Activated naive CD4-positive, alpha-beta T cell treated with anti-CD3 and anti-CD28 coated beads for 36 hours (primary cell): ENCODE measurements at regions of chr3 and their contacts with region 1.

Region 1: GRCh38 chr3:108914774-108915641 is 38.7 kb downstream of the GUCA1C start:
- DNase-seq: peak; percentile 81
- H3K4me3 Mint-ChIP-seq: peak overlapping the region; percentile 29
- H3K27ac Mint-ChIP-seq: peak overlapping the region; percentile 1
- H3K4me1 Mint-ChIP-seq: peaks cover 12% of the 10 kb centered on the region
- H3K27me3 Mint-ChIP-seq: no peaks in the 10 kb centered on the region

Region 2: DNA sequence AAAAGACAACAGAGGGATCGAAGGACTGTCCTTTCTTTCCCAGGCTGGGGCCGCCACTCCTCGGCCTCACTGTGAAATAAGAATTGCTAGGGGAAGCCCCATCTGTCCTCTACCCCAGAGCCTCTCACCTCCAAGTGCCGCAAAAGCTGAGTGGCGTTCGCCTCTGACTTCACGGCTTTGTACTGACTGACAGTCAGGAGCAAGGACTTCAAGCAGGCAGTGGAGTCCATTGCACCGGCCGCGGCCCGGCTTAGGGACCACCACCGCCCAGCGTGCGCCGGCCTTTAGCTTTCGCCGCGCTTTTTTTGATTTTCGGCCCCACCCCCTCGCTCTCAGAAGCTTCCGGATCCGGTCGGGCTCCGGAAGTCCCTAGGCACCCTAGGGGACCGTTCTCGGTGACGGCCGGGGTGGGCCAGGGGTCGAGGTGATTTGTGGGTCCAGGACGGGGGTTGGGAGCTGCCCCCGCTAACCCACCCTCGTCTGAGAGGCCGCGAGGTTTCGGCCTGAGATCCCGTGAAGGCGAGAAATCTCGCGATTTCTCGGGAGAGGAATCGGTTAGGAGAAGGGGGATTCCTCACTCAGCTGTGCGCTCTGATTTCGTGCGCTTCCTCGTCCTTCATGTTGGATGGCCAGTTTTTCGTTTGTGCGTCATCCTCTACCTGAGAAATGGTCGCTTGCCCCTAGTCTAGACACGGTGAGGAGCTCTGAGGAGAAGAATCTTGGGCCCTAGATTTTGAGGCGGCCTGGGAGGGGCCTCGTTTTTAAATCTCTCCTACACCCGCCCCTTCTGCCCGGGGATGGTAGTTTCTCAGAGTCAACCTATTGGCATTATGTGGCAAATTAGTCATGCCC is 325.6 kb before region 1 on chr3 and contains the starts of genes CIP2A and DZIP3:
- CTCF ChIA-PET with region 1: no interaction called
- intact Hi-C with region 1: loop called (anchors 1 kb)
- DNase-seq: peak; percentile 84
- H3K4me3 Mint-ChIP-seq: peak within 1 kb of the TSS; percentile 95
- H3K27ac Mint-ChIP-seq: peak within 1 kb of the TSS; percentile 99
- H3K4me1 Mint-ChIP-seq: peaks cover 36% of the 10 kb centered on the region
- H3K27me3 Mint-ChIP-seq: no peaks in the 10 kb centered on the region
- total RNA-seq, gene CIP2A: 34.7 to 39.9 TPM
- total RNA-seq, gene DZIP3: 11.2 to 12.2 TPM

Region 3: DNA sequence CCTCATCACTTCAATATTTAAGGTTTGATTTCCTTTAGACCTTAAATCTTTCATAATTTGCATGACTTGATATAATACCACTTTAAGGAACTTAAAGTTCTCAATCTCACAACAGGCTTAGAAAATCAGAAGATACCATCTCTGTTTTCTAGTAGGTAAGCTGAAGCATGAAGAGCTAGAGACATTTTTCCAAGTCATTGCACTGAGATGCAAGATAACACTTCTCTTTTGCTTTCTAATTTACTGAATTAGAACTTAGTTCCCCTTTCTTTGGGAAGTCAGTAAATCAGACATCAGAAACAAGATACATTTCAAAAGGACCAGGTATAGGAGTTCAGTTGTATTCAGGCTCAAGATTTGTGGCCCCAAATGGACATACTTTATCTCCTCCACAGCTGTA is 245.8 kb before region 1 on chr3:
- CTCF ChIA-PET with region 1: interaction called, 114 read pairs
- intact Hi-C with region 1: no loop called
- DNase-seq: no peak
- H3K4me3 Mint-ChIP-seq: no peak overlapping the region
- H3K27ac Mint-ChIP-seq: no peak overlapping the region
- H3K4me1 Mint-ChIP-seq: peaks cover 24% of the 10 kb centered on the region
- H3K27me3 Mint-ChIP-seq: no peaks in the 10 kb centered on the region

Region 4: DNA sequence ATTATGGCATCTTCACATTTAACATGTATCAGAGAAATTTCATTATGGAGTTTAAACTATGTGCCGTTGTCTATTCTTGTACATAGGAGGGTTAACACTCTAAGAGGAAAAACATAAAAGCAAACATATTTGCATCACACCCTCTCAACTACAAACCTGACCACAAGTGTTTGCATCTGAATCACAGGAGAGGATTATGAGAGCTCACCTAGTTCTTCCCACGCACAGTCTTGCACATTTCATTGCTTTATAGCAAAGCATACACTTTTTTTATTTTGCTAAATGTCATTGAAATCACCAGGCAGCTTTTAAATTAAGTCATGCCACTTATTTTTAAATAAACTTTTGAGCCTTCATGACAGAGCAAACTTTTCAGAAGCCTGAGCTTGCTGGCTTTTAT is 79.9 kb before region 1 on chr3:
- CTCF ChIA-PET with region 1: interaction called, 13 read pairs
- intact Hi-C with region 1: no loop called
- DNase-seq: peak; percentile 66
- H3K4me3 Mint-ChIP-seq: peak overlapping the region; percentile 81
- H3K27ac Mint-ChIP-seq: peak overlapping the region; percentile 93
- H3K4me1 Mint-ChIP-seq: peaks cover 77% of the 10 kb centered on the region
- H3K27me3 Mint-ChIP-seq: no peaks in the 10 kb centered on the region

Region 5: DNA sequence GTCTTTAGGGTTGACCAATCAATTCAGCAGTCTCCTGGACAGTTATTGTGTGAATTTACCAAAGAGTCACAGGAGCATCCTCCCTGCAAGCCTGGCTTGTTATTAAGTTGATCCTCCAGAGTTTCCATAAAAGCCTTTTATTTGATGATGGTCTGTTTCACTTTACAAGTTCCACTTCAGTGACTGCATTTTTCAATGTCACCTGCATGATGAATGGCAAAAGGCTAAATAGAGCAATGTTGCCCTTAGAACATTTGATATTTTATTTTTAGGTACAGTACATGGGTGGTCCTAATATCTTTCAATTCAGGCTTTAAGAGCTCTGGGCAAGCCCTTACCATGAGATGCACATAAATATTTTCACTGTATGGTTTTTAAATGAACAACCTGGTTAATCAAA is 16.0 kb after region 1 on chr3:
- CTCF ChIA-PET with region 1: interaction called, 16 read pairs
- intact Hi-C with region 1: no loop called
- DNase-seq: no peak
- H3K4me3 Mint-ChIP-seq: no peak overlapping the region
- H3K27ac Mint-ChIP-seq: no peak overlapping the region
- H3K4me1 Mint-ChIP-seq: no peaks in the 10 kb centered on the region
- H3K27me3 Mint-ChIP-seq: peaks cover 4% of the 10 kb centered on the region